ENCODE measurements at regions of chr13 and their contacts with region 1.

Region 1: GRCh38 chr13:38256911-38257310 is 92.7 kb upstream of the UFM1 start:
- DNase-seq: no peak
- ATAC-seq: no peak

Region 2: DNA sequence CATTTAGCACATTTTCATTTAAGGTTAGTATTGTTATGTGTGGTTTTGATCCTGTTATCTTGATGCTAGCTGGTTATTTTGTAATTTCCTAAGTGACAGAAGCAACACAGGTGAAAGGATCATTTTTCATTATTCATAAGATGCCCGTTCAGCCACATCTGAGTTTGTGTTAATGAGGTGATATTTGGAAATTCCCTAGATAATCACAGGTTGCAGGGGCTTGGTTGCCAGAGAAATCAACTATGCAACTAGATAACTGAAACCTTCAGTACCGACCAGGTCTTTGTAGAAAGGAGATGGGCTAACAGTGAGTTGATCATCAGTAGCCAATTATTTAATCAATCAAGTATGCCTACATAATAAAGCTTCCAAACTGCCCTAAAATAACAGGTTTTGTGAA is 28.6 kb before region 1 on chr13:
- intact Hi-C with region 1: loop called (anchors 2 kb)
- DNase-seq: no peak
- ATAC-seq: no peak

Region 3: DNA sequence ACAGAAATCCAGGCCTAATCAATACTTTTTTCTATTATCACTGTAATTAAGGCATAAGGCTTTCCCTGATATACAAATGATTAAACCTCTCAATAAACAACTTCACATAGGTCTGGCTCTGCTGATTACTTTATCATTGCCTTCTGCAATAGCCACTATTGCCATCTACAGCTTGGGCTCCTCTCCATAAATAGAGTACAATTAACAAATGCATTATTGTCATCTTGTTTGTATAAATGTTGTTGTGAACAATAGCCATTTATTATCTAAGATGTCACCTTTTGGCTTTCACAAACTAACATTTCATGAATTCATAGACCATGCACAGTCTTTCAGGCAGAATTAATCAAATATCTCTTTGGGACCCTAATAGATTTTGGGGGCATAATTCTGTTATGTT is 834.7 kb after region 1 on chr13:
- intact Hi-C with region 1: no loop called
- DNase-seq: no peak
- ATAC-seq: no peak